ENCODE measurements at regions of chr16 and their contacts with region 1.

Region 1: DNA sequence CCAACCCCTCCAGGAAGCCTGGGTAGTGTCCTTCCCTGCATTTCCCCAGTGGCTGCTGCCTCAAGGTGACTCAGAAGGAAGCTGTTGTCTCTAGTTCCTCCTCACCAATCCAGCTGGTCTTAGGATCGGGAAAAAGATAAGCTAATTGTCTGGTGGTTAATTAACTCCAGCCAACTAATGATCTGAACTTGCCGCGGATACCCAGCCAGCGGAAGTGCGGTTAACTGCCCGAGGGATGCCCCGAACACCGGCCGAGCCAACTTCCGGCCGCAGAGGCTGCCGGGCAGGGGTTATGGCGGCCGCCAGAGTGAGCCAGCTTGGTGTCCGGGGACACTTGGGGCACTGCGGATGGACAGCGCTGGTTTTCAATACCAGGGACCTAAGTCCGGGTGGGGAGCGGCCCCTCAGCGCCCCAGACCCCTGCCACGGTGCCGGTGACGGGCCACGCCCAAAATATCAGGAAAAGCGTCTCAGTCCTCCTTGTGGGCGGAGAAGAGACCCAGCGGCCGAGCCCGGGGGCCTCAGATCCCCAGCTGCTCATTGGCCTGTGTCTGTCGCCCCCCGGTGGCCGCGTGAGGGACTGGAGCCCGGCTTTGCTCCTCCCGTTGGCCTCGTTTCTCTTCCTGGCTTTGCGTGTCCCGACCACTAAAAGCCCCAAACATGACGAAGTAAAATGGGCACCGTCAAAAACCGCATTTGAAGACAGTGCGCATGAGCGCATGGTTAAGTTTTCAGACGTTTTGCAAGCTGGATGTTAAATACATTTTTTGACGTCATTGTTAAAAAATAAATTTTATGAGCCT is 10.2 kb upstream of the PRSS22 start:
- DNase-seq: peak; percentile 98
- H3K4me3 ChIP-seq: peak overlapping the region; percentile 67 to 75 (median 68)
- H3K27ac ChIP-seq: peak overlapping the region; percentile 88 to 91 (median 90)
- H3K4me1 ChIP-seq: peaks cover 6 to 12% (median 9%) of the 10 kb centered on the region in 4 donors
- H3K27me3 ChIP-seq: peaks cover 0 to 5% (median 0%) of the 10 kb centered on the region in 4 donors
- CTCF ChIP-seq: peak in 2 of 3 experiments; percentile 97 to 98
- EP300 ChIP-seq: no peak
- POLR2A ChIP-seq: peak; percentile 59

Region 2: GRCh38 chr16:2715519-2715918 is 152.7 kb before region 1 on chr16:
- intact Hi-C with region 1: loop called (anchors 10 kb)
- DNase-seq: no peak
- H3K4me3 ChIP-seq: peak overlapping the region in 1 of 4 donors; percentile 6
- H3K27ac ChIP-seq: no peak overlapping the region
- H3K4me1 ChIP-seq: peaks cover 8 to 23% (median 20%) of the 10 kb centered on the region in 4 donors
- H3K27me3 ChIP-seq: peaks cover 0 to 21% (median 2%) of the 10 kb centered on the region in 4 donors
- CTCF ChIP-seq: no peak
- EP300 ChIP-seq: no peak
- POLR2A ChIP-seq: no peak